Activated CD4-positive, alpha-beta T cell treated with anti-CD3 and anti-CD28 coated beads, Interleukin-2, amount 10 ng/mL, durations not matched to agents 24 days and 14 days (primary cell): ENCODE measurements at regions of chr7 and their contacts with region 1.

Region 1: GRCh38 chr7:7848246-7848645 is 120.3 kb upstream of the GLCCI1 start:
- DNase-seq: no peak
- H3K4me3 Mint-ChIP-seq: peak overlapping the region; percentile 49
- H3K27ac Mint-ChIP-seq: no peak overlapping the region
- H3K4me1 Mint-ChIP-seq: peaks cover 16% of the 10 kb centered on the region
- H3K27me3 Mint-ChIP-seq: no peaks in the 10 kb centered on the region

Region 2: DNA sequence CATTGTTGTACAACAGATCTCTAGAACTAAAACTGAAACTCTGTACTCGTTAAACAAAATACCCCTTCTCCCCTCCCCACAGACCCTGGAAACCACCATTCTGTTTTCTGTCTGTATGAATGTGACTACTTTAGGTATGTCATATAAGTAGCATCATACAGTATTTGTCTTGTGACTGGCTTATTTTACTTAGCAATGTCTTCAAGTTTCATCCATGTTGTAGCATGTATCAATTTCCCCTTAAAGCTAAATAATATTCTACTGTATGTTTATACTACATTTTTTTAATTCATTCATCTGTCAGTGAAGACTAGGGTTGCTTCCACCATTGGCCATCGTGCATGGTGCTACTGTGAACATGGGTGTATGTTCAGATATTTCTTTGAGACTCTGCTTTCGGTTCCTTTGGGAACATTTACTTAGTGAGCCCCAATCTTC is 58.7 kb before region 1 on chr7:
- intact Hi-C with region 1: no loop called
- DNase-seq: no peak
- H3K4me3 Mint-ChIP-seq: no peak overlapping the region
- H3K27ac Mint-ChIP-seq: no peak overlapping the region
- H3K4me1 Mint-ChIP-seq: peaks cover 1% of the 10 kb centered on the region
- H3K27me3 Mint-ChIP-seq: no peaks in the 10 kb centered on the region

Region 3: DNA sequence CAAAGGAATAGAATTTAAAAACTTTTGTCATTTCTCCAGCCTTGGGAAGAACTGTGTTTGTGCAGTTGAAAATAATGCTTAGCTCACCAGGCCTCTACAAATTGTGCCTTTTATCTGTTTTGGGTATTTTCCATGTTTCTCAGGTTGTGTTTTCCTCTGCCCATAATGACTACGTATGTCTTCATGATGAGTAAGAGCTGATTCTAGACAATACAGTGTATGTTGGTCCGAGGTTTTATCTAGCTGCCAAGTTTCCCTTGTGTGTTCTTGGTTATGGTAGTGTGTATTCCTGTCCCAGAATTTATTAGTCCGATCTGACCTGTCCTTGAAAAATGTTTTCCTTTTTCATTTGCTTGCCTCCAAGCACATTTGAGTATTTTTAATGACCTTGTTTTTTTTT is 36.6 kb after region 1 on chr7:
- intact Hi-C with region 1: no loop called
- DNase-seq: no peak
- H3K4me3 Mint-ChIP-seq: no peak overlapping the region
- H3K27ac Mint-ChIP-seq: no peak overlapping the region
- H3K4me1 Mint-ChIP-seq: no peaks in the 10 kb centered on the region
- H3K27me3 Mint-ChIP-seq: no peaks in the 10 kb centered on the region

Region 4: DNA sequence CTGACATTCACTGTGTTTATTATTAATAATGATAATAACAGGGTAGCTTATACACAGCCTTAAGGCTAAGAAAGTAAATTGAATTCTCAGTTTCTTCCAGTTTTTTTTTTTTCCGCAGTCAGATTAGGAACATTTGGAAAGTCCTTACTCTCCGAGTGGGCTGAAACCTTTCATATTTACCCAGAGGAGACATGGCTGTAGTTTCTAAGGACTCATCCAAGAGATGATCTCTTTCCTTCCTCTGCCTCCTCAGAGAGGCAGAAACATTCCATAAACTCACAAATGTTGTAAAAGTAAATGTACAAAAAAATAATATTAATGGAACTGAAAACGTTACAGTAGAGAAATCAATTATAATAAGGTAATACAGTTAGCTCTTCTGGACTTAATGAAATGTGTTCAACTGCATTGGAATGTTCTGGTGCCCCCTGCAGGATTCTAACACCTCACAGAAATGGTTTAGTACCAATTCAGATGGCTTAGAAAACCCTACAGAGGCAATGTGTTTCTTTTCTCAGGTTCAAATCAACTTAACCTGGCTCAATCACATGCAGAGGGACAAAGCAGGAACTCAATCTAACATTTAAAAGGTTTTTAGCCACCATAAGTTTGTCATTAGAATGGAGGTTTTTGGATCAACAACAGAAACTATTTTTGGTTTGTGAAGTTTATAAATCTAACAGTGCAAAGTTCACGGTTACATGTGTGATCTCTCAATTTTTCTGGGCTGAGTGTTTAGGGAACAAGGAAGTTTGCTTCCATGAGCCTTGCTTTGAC is 342.1 kb after region 1 on chr7:
- intact Hi-C with region 1: loop called (anchors 10 kb)
- DNase-seq: peak; percentile 89
- H3K4me3 Mint-ChIP-seq: no peak overlapping the region
- H3K27ac Mint-ChIP-seq: no peak overlapping the region
- H3K4me1 Mint-ChIP-seq: peaks cover 31% of the 10 kb centered on the region
- H3K27me3 Mint-ChIP-seq: peaks cover 5% of the 10 kb centered on the region